Heart right ventricle (tissue), 16 donors: ENCODE measurements at regions of chr1 and their contacts with region 1.

Region 1: GRCh38 chr1:152440635-152441471 is 26.8 kb upstream of the CRNN start:
- DNase-seq: peak; percentile 55 to 73
- ATAC-seq: peak; percentile 73 to 92 (median 82)
- H3K4me3 ChIP-seq: no peak overlapping the region
- H3K27ac ChIP-seq: peak overlapping the region in 1 of 10 donors; percentile 47
- H3K4me1 ChIP-seq: peaks cover 0 to 35% (median 13%) of the 10 kb centered on the region in 9 donors
- H3K27me3 ChIP-seq: peaks cover 0 to 29% (median 18%) of the 10 kb centered on the region in 7 donors
- CTCF ChIP-seq: peak; percentile 62 to 90 (median 81)

Region 2: DNA sequence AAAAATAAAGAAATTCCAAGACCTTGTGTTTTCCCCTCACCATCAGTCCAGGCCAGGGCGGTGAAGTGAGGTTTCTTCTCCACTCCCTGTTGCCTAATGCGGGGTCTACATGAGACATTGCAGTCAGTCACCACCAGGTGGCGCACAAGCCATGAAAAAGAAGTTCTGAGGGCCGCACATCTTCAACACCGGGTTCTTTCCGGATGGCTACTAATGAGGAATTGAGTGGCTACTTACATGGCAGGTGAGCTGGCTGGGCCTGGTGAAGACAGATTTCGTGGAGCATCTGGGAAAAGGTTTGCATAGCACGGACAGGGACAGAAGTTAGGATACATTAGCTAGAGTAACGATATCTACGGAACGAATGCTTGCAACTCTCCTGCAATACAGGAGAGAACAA is 388.2 kb before region 1 on chr1:
- intact Hi-C with region 1: loop called in 2 of 10 experiments (anchors 5 kb)
- DNase-seq: peak; percentile 81 to 84
- ATAC-seq: peak in 6 of 8 donors; percentile 31 to 57 (median 50)
- H3K4me3 ChIP-seq: no peak overlapping the region
- H3K27ac ChIP-seq: no peak overlapping the region
- H3K4me1 ChIP-seq: peaks cover 2 to 42% (median 11%) of the 10 kb centered on the region in 9 donors
- H3K27me3 ChIP-seq: peaks cover 0 to 48% (median 30%) of the 10 kb centered on the region in 7 donors
- CTCF ChIP-seq: peak; percentile 79 to 95 (median 91)

Region 3: GRCh38 chr1:152141974-152142584 is 298.8 kb before region 1 on chr1:
- intact Hi-C with region 1: loop called in 2 of 10 experiments (anchors 5 kb)
- DNase-seq: peak; percentile 13 to 53
- ATAC-seq: peak in 2 of 8 donors; percentile 49 to 60
- H3K4me3 ChIP-seq: no peak overlapping the region
- H3K27ac ChIP-seq: no peak overlapping the region
- H3K4me1 ChIP-seq: peaks cover 0 to 4% (median 0%) of the 10 kb centered on the region in 9 donors
- H3K27me3 ChIP-seq: peaks cover 0 to 31% (median 20%) of the 10 kb centered on the region in 7 donors
- CTCF ChIP-seq: peak; percentile 50 to 82 (median 70)

Region 4: DNA sequence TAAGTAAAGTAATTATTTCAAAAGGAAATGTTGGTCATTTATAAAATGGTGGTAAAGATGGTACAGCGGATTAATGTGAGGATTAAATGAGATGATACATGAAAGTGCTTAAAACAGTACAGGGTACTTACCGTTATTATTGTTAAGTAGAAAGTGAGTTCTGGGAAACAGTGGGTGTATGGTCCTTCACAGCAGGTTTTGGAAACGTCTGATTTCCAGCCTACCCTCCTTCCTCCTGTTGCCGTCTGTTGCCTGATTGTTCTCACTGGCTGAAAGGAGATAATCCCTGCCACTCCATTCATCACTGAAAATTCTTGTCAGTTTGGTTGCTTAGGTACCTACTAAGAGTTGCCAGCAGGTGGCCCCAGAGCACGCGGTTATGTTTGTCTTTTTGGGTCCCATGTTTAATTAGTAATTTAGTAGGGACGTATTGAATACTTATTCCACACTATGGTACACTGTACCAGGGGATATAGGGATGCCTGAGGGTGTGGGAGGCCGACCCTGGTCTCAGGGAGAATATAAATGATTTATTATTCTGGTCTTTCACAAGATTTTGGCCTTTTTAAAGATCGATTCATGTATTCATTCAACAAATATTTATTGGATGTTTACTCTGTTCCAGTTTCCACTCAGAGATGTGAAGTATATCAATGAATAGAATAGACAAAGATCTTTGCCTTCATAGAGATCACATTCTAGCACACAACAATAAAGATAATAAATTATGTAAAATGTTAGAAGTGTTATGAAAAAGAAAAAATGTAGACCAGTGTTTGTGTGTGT is 251.0 kb before region 1 on chr1:
- intact Hi-C with region 1: loop called in 8 of 10 experiments (anchors 1 to 5 kb)
- DNase-seq: peak; percentile 45 to 54
- ATAC-seq: peak in 7 of 8 donors; percentile 46 to 75 (median 68)
- H3K4me3 ChIP-seq: peak overlapping the region in 8 of 10 donors; percentile 57 to 69 (median 61)
- H3K27ac ChIP-seq: peak overlapping the region in 4 of 10 donors; percentile 52 to 69 (median 60)
- H3K4me1 ChIP-seq: peaks cover 0 to 15% (median 0%) of the 10 kb centered on the region in 9 donors
- H3K27me3 ChIP-seq: peaks cover 0 to 28% (median 0%) of the 10 kb centered on the region in 7 donors
- CTCF ChIP-seq: peak; percentile 42 to 80 (median 77)

Region 5: GRCh38 chr1:152347116-152347728 is 93.6 kb before region 1 on chr1:
- intact Hi-C with region 1: loop called in 3 of 10 experiments (anchors 10 kb)
- DNase-seq: peak in 1 of 2 donors; percentile 41
- ATAC-seq: no peak
- H3K4me3 ChIP-seq: no peak overlapping the region
- H3K27ac ChIP-seq: no peak overlapping the region
- H3K4me1 ChIP-seq: no peaks in the 10 kb centered on the region
- H3K27me3 ChIP-seq: peaks cover 0 to 5% (median 0%) of the 10 kb centered on the region in 7 donors
- CTCF ChIP-seq: peak; percentile 49 to 89 (median 76)

Region 6: GRCh38 chr1:152356736-152357135 is 84.1 kb before region 1 on chr1:
- intact Hi-C with region 1: loop called in 1 of 10 experiments (anchors 10 kb)
- DNase-seq: no peak
- ATAC-seq: no peak
- H3K4me3 ChIP-seq: no peak overlapping the region
- H3K27ac ChIP-seq: no peak overlapping the region
- H3K4me1 ChIP-seq: no peaks in the 10 kb centered on the region
- H3K27me3 ChIP-seq: no peaks in the 10 kb centered on the region
- CTCF ChIP-seq: no peak

Region 7: GRCh38 chr1:152459596-152460528 is 19.0 kb after region 1 on chr1:
- intact Hi-C with region 1: loop called in 1 of 10 experiments (anchors 2 kb)
- DNase-seq: peak; percentile 55 to 79
- ATAC-seq: peak in 7 of 8 donors; percentile 51 to 77 (median 69)
- H3K4me3 ChIP-seq: peak overlapping the region in 4 of 10 donors; percentile 3 to 33 (median 24)
- H3K27ac ChIP-seq: peak overlapping the region in 3 of 10 donors; percentile 12 to 82 (median 16)
- H3K4me1 ChIP-seq: peaks cover 0 to 12% (median 4%) of the 10 kb centered on the region in 9 donors
- H3K27me3 ChIP-seq: peaks cover 0 to 3% (median 0%) of the 10 kb centered on the region in 7 donors
- CTCF ChIP-seq: peak; percentile 66 to 83 (median 77)